ENCODE measurements at regions of chr4 and their contacts with region 1.

Region 1: DNA sequence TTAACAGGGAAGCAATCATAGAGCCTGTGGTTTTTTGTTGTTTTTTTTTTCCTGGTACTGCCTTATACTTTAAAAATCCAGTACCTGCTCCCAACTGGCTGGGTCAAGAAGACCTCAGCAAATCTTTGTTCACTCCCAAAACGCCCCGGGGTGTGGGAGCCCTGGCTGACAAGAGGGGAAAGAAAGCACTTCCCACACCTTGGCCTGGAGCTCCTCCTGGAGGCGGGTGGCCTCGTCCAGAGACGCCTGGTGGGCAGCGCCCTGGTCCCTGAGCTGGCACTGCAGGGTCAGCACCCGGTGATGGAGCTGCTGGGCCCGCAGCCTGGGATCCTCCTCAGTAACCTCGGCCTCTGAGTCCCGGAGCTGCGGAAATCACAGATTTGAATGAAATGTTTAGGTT is 38.3 kb downstream of the C4orf50 start:
- DNase-seq: peak; percentile 63
- ATAC-seq: peak; percentile 63
- H3K4me3 ChIP-seq: no peak overlapping the region
- H3K27ac ChIP-seq: no peak overlapping the region
- H3K4me1 ChIP-seq: no peaks in the 10 kb centered on the region
- H3K27me3 ChIP-seq: peaks cover 11% of the 10 kb centered on the region
- CTCF ChIP-seq: peak; percentile 49

Region 2: GRCh38 chr4:5742968-5743670 is 236.9 kb before region 1 on chr4:
- intact Hi-C with region 1: no loop called
- DNase-seq: no peak
- ATAC-seq: no peak
- H3K4me3 ChIP-seq: no peak overlapping the region
- H3K27ac ChIP-seq: no peak overlapping the region
- H3K4me1 ChIP-seq: no peaks in the 10 kb centered on the region
- H3K27me3 ChIP-seq: no peaks in the 10 kb centered on the region
- CTCF ChIP-seq: no peak

Region 3: DNA sequence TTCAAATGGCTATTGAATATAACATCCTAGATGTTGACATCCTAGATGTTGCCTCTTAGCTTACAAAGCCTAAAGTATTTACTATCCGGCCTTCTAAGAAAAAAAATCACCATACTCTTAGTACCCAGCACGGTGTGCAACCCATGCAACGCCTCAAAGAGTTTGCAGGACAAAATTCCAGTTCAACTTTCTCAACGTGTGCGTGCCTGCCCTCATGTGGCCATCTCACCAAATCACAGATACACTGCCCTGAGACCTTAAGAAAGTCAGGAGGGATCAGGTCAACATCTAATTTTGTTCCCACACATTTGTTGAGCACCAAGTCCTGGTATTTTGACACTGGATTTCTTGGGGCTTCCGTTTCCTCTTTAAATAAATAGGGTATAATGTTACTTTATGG is 155.3 kb before region 1 on chr4:
- intact Hi-C with region 1: loop called (anchors 10 kb)
- DNase-seq: no peak
- ATAC-seq: no peak
- H3K4me3 ChIP-seq: no peak overlapping the region
- H3K27ac ChIP-seq: no peak overlapping the region
- H3K4me1 ChIP-seq: peaks cover 12% of the 10 kb centered on the region
- H3K27me3 ChIP-seq: no peaks in the 10 kb centered on the region
- CTCF ChIP-seq: peak; percentile 52

Region 4: GRCh38 chr4:6116696-6117285 is 136.8 kb after region 1 on chr4:
- intact Hi-C with region 1: no loop called
- DNase-seq: peak; percentile 43
- ATAC-seq: no peak
- H3K4me3 ChIP-seq: no peak overlapping the region
- H3K27ac ChIP-seq: no peak overlapping the region
- H3K4me1 ChIP-seq: no peaks in the 10 kb centered on the region
- H3K27me3 ChIP-seq: no peaks in the 10 kb centered on the region
- CTCF ChIP-seq: no peak